ENCODE measurements at regions of chr6 and their contacts with region 1.

Region 1: GRCh38 chr6:96853083-96853482 is 15.8 kb upstream of the GPR63 start:
- DNase-seq: no peak
- H3K4me3 ChIP-seq: no peak overlapping the region
- H3K27ac ChIP-seq: no peak overlapping the region
- H3K4me1 ChIP-seq: no peaks in the 10 kb centered on the region
- H3K27me3 ChIP-seq: peaks cover 2% of the 10 kb centered on the region
- CTCF ChIP-seq: no peak

Region 2: DNA sequence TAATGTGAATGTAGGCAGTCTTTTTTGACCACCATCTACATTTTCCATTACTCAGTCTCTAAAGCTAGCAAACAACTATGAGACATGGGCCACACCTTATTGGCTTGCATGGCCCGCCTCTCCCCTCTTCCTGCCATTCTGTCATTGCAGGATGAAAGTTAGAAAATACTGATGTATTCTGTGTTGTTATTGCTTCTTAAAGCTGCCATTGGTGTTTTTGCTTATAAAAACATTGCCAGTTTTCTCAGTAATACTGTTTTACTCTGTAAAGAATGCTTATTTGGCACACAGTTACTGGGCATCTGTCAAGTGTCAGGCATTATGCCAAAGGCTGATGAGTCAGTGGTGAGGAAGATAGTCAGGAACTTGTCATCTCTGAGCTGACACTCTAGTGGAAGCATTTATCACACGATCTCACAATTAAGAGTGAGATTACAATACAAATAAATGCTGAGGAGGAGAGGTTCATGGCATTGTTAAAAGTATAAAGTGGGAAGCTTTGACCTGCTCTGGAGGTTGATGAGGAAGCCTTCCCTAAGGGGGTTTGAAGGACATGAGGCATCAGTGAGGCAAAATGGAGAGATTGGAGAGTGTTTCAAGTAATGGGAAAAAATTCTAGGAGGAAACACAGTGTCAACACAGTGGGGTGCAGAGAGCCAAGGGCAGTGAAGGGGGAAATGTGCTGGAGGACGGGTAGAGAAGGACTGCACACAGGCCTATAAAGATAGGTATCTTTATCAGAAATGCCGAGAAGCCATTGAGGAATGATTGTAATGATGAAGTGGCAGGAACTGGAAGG is 86.1 kb after region 1 on chr6:
- CTCF ChIA-PET with region 1: no interaction called
- dilution Hi-C with region 1: loop called (anchors 5 kb)
- in situ Hi-C with region 1: no loop called
- intact Hi-C with region 1: no loop called
- DNase-seq: peak; percentile 67
- H3K4me3 ChIP-seq: no peak overlapping the region
- H3K27ac ChIP-seq: no peak overlapping the region
- H3K4me1 ChIP-seq: peaks cover 14% of the 10 kb centered on the region
- H3K27me3 ChIP-seq: peaks cover 3% of the 10 kb centered on the region
- CTCF ChIP-seq: no peak